ENCODE measurements at regions of chr2 and their contacts with region 1.

Region 1: DNA sequence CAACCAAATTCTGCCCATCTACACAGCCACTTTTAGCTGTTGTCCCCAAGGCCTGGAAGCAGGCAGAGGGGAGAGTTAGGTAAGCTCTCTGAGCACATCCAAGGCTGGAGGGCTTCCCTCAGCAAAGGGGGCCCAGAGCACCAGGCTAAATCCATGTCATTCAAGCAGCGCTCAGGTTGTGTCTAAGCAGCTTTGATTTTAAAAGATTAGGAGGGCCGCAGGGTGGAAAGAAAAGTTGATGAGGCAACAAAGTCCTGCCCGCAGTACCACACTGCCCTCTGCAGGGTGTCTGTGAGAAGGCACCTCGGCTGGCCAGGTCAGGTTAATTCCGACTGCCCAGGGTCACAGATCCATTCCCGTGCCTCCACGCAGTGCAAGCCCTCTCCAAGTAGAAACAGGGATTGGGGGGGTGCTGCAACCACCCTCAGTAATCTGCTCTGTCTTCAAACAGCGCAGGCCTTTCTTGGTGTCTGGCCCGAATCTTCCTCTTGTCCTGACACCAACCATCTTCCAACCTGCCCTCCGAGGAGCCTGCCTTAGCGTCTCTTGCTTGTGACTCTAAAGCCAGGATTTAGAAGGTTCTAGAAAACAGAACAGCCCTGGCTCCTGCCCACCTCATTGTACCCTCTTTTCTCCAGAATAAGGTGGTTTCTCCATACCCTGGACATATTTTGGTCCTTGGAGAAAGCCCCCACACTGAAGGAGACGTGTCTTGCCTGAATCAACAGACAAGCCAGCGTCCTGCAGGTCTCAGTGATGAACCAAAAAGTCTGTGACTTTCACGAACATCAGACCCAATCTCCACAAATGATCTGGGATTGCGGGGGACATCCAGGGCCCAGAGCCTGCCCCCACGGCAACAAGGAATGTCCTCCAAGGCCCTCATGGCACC is 289.2 kb downstream of the TNS1 start:
- DNase-seq: peak; percentile 38 to 64
- ATAC-seq: peak; percentile 76 to 77
- H3K4me3 ChIP-seq: no peak overlapping the region
- H3K27ac ChIP-seq: peak overlapping the region; percentile 30 to 67 (median 41)
- H3K4me1 ChIP-seq: peaks cover 10 to 18% of the 10 kb centered on the region in 2 donors
- H3K27me3 ChIP-seq: no peaks in the 10 kb centered on the region
- CTCF ChIP-seq: peak; percentile 86 to 99 (median 93)
- POLR2A ChIP-seq: no peak

Region 2: GRCh38 chr2:216034065-216034464 is 1679.6 kb before region 1 on chr2:
- in situ Hi-C with region 1: no loop called
- intact Hi-C with region 1: loop called (anchors 10 kb)
- DNase-seq: peak in 1 of 2 donors; percentile 37
- ATAC-seq: peak in 1 of 2 donors; percentile 66
- H3K4me3 ChIP-seq: no peak overlapping the region
- H3K27ac ChIP-seq: no peak overlapping the region
- H3K4me1 ChIP-seq: no peaks in the 10 kb centered on the region
- H3K27me3 ChIP-seq: no peaks in the 10 kb centered on the region
- CTCF ChIP-seq: peak; percentile 49 to 88 (median 67)
- POLR2A ChIP-seq: no peak

Region 3: GRCh38 chr2:216535454-216535995 is 1178.1 kb before region 1 on chr2:
- in situ Hi-C with region 1: loop called in 1 of 4 experiments (anchors 25 kb)
- intact Hi-C with region 1: no loop called
- DNase-seq: peak; percentile 24 to 39
- ATAC-seq: peak; percentile 51 to 78
- H3K4me3 ChIP-seq: no peak overlapping the region
- H3K27ac ChIP-seq: peak overlapping the region; percentile 53 to 70 (median 65)
- H3K4me1 ChIP-seq: peaks cover 8 to 21% of the 10 kb centered on the region in 2 donors
- H3K27me3 ChIP-seq: no peaks in the 10 kb centered on the region
- CTCF ChIP-seq: no peak
- POLR2A ChIP-seq: no peak

Region 4: DNA sequence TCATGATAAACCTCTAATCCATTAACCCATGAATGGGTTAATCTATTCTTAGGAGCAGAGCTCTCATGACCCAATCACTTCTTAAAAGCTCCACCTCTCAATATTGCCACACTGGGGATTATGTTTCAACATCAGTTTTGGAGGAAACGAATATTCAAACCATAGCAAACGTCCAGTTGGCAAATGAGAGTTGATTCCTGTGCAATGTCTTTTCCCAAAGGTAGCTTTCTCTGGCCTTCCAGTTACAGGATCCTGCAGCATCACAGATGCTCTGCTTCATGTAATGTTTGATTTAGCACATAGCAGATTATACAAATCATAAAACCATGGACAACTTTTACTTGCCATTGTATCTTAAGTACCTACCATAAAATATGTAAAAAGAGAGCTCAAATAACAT is 191.8 kb before region 1 on chr2:
- in situ Hi-C with region 1: loop called in 3 of 4 experiments (anchors 5 to 25 kb)
- intact Hi-C with region 1: loop called (anchors 10 kb)
- DNase-seq: peak in 1 of 2 donors; percentile 14
- ATAC-seq: peak; percentile 69 to 76
- H3K4me3 ChIP-seq: no peak overlapping the region
- H3K27ac ChIP-seq: no peak overlapping the region
- H3K4me1 ChIP-seq: peaks cover 0 to 6% of the 10 kb centered on the region in 2 donors
- H3K27me3 ChIP-seq: no peaks in the 10 kb centered on the region
- CTCF ChIP-seq: no peak
- POLR2A ChIP-seq: no peak

Region 5: DNA sequence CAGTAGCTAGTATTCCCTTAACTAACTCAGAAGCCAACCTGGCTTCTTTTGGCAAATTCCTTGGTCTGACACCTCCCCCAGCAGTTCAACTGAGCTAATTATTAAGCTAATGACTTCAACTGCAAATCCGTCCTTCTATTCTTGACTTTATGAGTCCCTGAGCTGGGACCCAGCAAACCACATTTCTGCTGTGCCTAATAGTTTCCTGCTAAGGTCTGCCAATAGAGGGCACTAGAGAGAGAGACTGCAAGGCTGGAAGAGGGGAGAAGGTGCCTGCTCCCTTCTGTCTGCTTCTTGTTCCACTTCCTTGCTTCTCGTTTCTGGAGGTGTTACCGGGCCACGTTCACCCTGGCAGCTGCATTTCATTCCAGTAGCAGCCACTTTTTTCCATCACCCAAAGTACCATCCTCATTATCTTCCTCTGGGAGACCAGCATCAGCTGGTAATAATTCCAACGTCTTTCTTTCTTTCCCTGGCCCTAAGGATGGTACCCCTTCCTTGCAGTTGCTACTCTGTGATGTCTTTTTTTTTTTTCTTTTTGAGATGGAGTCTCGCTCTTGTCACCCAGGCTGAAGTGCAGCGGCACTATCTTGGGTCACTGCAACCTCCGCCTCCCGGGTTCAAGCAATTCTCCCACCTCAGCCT is 62.8 kb before region 1 on chr2:
- in situ Hi-C with region 1: loop called in 1 of 4 experiments (anchors 5 kb)
- intact Hi-C with region 1: loop called (anchors 1 kb)
- DNase-seq: peak in 1 of 2 donors; percentile 21
- ATAC-seq: peak; percentile 55 to 77
- H3K4me3 ChIP-seq: no peak overlapping the region
- H3K27ac ChIP-seq: no peak overlapping the region
- H3K4me1 ChIP-seq: peaks cover 5 to 6% of the 10 kb centered on the region in 2 donors
- H3K27me3 ChIP-seq: no peaks in the 10 kb centered on the region
- CTCF ChIP-seq: peak; percentile 8 to 74 (median 53)
- POLR2A ChIP-seq: no peak

Region 6: GRCh38 chr2:217822296-217823252 is 108.9 kb after region 1 on chr2:
- in situ Hi-C with region 1: no loop called
- intact Hi-C with region 1: no loop called
- DNase-seq: no peak
- ATAC-seq: no peak
- H3K4me3 ChIP-seq: no peak overlapping the region
- H3K27ac ChIP-seq: peak overlapping the region; percentile 99 to 100 (median 99)
- H3K4me1 ChIP-seq: peaks cover 63 to 95% of the 10 kb centered on the region in 2 donors
- H3K27me3 ChIP-seq: no peaks in the 10 kb centered on the region
- CTCF ChIP-seq: no peak
- POLR2A ChIP-seq: no peak

Measured in gastrocnemius medialis (tissue), 4 donors.